Right ventricle myocardium superior (tissue), 1 donor: ENCODE measurements at regions of chr2 and their contacts with region 1.

Region 1: GRCh38 chr2:157990173-157990572 is 111.5 kb upstream of the UPP2 start:
- DNase-seq: no peak
- ATAC-seq: no peak

Region 2: DNA sequence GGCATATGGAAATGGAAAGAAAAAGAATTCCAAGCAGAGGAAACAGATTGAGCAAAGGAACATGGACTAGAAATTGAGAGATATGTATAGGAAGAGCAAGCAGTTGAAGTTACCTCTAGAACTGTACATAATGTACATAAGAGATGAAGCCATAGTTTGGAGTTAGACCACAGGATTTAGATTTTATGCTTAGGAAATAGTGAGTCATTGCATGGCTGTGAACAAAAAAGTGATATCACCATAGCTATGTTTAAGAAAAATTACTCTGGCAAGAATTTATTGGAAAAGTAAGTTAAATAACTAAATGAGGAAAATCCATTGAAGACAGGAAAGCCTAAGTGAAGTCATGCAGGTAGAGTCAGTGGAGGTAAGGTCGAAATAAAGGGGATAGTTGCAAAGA is 832.1 kb before region 1 on chr2:
- intact Hi-C with region 1: no loop called
- DNase-seq: no peak
- ATAC-seq: no peak

Region 3: GRCh38 chr2:157876066-157876787 is 113.9 kb before region 1 on chr2 and contains the start of gene ACVR1:
- intact Hi-C with region 1: loop called (anchors 10 kb)
- DNase-seq: peak; percentile 98
- ATAC-seq: peak; percentile 96
- total RNA-seq, gene ACVR1: 28.9 TPM